ENCODE measurements at regions of chrX and their contacts with region 1.

Region 1: GRCh38 chrX:109384699-109385098 is 97.2 kb downstream of the GUCY2F start:
- DNase-seq: no peak
- ATAC-seq: peak; percentile 74
- H3K4me3 ChIP-seq: no peak overlapping the region
- H3K27ac ChIP-seq: no peak overlapping the region
- H3K4me1 ChIP-seq: no peaks in the 10 kb centered on the region
- H3K27me3 ChIP-seq: no peaks in the 10 kb centered on the region
- CTCF ChIP-seq: peak; percentile 37 to 47 (median 46); a peak in 4 of 6 replicates
- EP300 ChIP-seq: no peak
- POLR2A ChIP-seq: no peak
- RAD21 ChIP-seq: peak; percentile 76

Region 2: GRCh38 chrX:108584617-108585211 is 800.0 kb before region 1 on chrX:
- CTCF ChIA-PET with region 1: interaction called, 83 read pairs
- POLR2A ChIA-PET with region 1: no interaction called
- RAD21 ChIA-PET with region 1: interaction called, 40 read pairs
- SMC1A ChIA-PET with region 1: interaction called, 56 read pairs
- in situ Hi-C with region 1: no loop called
- intact Hi-C with region 1: loop called (anchors 2 kb)
- DNase-seq: peak; percentile 1
- ATAC-seq: peak; percentile 53
- H3K4me3 ChIP-seq: no peak overlapping the region
- H3K27ac ChIP-seq: no peak overlapping the region
- H3K4me1 ChIP-seq: no peaks in the 10 kb centered on the region
- H3K27me3 ChIP-seq: no peaks in the 10 kb centered on the region
- CTCF ChIP-seq: peak; percentile 46 to 60 (median 52); a peak in 5 of 6 replicates
- EP300 ChIP-seq: no peak
- POLR2A ChIP-seq: no peak
- RAD21 ChIP-seq: peak; percentile 75

Region 3: DNA sequence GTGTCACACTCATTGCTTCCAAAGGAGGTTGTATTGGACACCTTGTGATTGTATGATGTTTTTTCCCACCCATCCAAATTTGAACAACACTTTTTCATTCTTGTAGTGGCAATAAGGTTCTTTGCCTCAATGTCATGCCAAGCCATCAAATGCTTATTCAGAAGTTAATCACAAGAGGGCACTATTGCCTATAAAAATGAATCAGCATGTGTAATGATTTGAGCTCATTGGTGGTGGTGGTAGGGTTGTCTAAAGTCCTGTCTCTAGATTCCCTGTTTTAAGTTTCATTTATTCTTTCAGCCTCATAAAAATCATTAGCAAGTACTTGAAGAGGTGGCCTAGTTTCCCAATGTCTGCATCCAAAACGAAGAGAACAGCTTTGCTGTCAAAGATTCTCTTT is 685.3 kb before region 1 on chrX:
- CTCF ChIA-PET with region 1: interaction called, 359 read pairs
- POLR2A ChIA-PET with region 1: interaction called, 8 read pairs
- RAD21 ChIA-PET with region 1: interaction called, 330 read pairs
- SMC1A ChIA-PET with region 1: interaction called, 361 read pairs
- in situ Hi-C with region 1: loop called (anchors 5 kb)
- intact Hi-C with region 1: loop called (anchors 1 kb)
- DNase-seq: peak; percentile 7
- ATAC-seq: peak; percentile 92
- H3K4me3 ChIP-seq: no peak overlapping the region
- H3K27ac ChIP-seq: no peak overlapping the region
- H3K4me1 ChIP-seq: no peaks in the 10 kb centered on the region
- H3K27me3 ChIP-seq: no peaks in the 10 kb centered on the region
- CTCF ChIP-seq: peak; percentile 23 to 55 (median 50); a peak in 5 of 6 replicates
- EP300 ChIP-seq: no peak
- POLR2A ChIP-seq: no peak
- RAD21 ChIP-seq: peak; percentile 68

Region 4: DNA sequence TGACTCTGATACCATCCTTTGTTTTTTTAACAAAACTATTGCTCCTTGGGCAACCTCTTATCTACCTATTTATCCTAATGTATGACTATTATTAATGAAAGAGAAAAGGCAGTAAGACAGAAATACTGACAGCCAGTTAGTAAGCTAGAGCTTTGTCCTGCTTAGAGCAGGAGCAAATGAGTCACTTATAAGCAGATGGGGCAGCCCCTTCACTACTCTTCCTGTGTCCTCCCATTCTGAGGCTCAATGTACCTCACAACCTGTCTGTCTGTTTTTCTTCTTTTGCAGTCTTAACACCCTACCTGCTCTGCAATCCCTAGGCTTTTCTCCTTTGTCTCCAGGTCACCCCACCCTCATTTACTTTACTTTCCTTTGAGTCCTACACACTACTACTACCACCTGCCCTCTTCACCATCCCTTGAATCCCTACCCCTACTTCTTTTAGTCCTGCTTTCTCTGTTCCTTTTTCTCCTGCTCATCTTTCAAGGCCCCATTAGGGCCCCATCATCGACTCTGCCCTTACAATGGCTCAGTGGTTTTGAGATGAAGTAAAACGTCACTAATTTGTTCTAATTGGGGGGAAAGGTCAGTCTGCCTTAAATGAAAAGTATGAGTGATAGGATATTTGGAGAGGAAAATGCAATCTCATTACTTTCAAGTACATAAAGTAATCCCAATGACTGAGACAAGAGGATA is 197.1 kb before region 1 on chrX:
- CTCF ChIA-PET with region 1: interaction called, 18 read pairs
- POLR2A ChIA-PET with region 1: interaction called, 4 read pairs
- RAD21 ChIA-PET with region 1: interaction called, 26 read pairs
- SMC1A ChIA-PET with region 1: interaction called, 31 read pairs
- in situ Hi-C with region 1: no loop called
- intact Hi-C with region 1: loop called (anchors 5 kb)
- DNase-seq: no peak
- ATAC-seq: peak; percentile 87
- H3K4me3 ChIP-seq: no peak overlapping the region
- H3K27ac ChIP-seq: no peak overlapping the region
- H3K4me1 ChIP-seq: peaks cover 4% of the 10 kb centered on the region; the same call in 1 of the 2 replicates
- H3K27me3 ChIP-seq: no peaks in the 10 kb centered on the region
- CTCF ChIP-seq: no peak
- EP300 ChIP-seq: peak in 1 of 2 experiments; percentile 36; a peak in 1 of 4 replicates
- POLR2A ChIP-seq: no peak
- RAD21 ChIP-seq: no peak

Region 5: DNA sequence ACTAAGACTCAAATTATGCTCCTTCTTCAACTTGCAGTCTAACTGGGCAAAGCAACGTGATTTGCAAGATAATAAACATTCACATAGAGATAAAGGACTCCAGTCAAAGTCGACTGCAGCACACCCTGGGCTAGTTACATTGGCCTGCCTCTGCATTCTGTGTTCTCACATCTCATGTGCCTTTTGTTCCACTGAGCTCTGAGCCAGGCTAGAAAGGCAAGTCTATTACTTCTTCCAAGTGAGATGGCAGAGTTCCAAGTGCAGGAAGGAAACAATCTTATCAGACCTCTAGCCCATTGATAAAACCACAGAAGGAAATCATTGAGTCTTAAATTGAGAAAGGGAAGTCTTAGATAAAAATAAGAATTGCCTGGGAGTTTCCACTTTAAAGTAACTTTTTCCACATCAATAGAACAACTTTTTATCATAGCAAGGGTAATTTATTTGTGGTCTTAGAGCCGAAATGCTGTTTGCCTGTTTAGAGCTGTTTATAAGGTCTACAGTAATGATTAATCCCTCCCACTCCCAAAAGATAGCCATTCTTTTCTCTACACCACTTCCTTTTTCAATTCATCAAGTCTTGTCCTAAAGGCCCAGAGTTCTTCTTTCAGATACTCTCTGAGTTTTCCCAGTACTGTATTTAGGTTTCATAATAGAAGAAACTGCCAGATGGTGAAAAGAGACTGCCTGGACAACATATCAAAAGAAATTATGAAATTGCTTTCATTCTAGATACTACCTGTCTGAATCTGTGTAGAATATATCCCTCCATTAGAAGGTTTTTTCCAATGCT is 103.0 kb before region 1 on chrX:
- CTCF ChIA-PET with region 1: interaction called, 3 read pairs
- POLR2A ChIA-PET with region 1: no interaction called
- RAD21 ChIA-PET with region 1: interaction called, 4 read pairs
- SMC1A ChIA-PET with region 1: interaction called, 20 read pairs
- in situ Hi-C with region 1: no loop called
- intact Hi-C with region 1: no loop called
- DNase-seq: no peak
- ATAC-seq: peak; percentile 83
- H3K4me3 ChIP-seq: no peak overlapping the region
- H3K27ac ChIP-seq: no peak overlapping the region
- H3K4me1 ChIP-seq: no peaks in the 10 kb centered on the region
- H3K27me3 ChIP-seq: no peaks in the 10 kb centered on the region
- CTCF ChIP-seq: no peak
- EP300 ChIP-seq: no peak
- POLR2A ChIP-seq: no peak
- RAD21 ChIP-seq: no peak

Region 6: GRCh38 chrX:109360291-109360690 is 24.4 kb before region 1 on chrX:
- CTCF ChIA-PET with region 1: interaction called, 9 read pairs
- POLR2A ChIA-PET with region 1: no interaction called
- RAD21 ChIA-PET with region 1: interaction called, 7 read pairs
- SMC1A ChIA-PET with region 1: interaction called, 16 read pairs
- in situ Hi-C with region 1: no loop called
- intact Hi-C with region 1: no loop called
- DNase-seq: no peak
- ATAC-seq: no peak
- H3K4me3 ChIP-seq: no peak overlapping the region
- H3K27ac ChIP-seq: no peak overlapping the region
- H3K4me1 ChIP-seq: no peaks in the 10 kb centered on the region
- H3K27me3 ChIP-seq: no peaks in the 10 kb centered on the region
- CTCF ChIP-seq: no peak
- EP300 ChIP-seq: no peak
- POLR2A ChIP-seq: no peak
- RAD21 ChIP-seq: no peak

Region 7: GRCh38 chrX:109643687-109644086 is 259.0 kb after region 1 on chrX:
- CTCF ChIA-PET with region 1: no interaction called
- POLR2A ChIA-PET with region 1: no interaction called
- RAD21 ChIA-PET with region 1: no interaction called
- SMC1A ChIA-PET with region 1: no interaction called
- in situ Hi-C with region 1: no loop called
- intact Hi-C with region 1: no loop called
- DNase-seq: no peak
- ATAC-seq: no peak
- H3K4me3 ChIP-seq: no peak overlapping the region
- H3K27ac ChIP-seq: peak overlapping the region; percentile 6; the same call in 1 of the 2 replicates
- H3K4me1 ChIP-seq: no peaks in the 10 kb centered on the region
- H3K27me3 ChIP-seq: no peaks in the 10 kb centered on the region
- CTCF ChIP-seq: no peak
- EP300 ChIP-seq: no peak
- POLR2A ChIP-seq: no peak
- RAD21 ChIP-seq: no peak